Activated CD4-positive, alpha-beta T cell treated with anti-CD3 and anti-CD28 coated beads for 36 hours (primary cell): ENCODE measurements at regions of chr1 and their contacts with region 1.

Region 1: DNA sequence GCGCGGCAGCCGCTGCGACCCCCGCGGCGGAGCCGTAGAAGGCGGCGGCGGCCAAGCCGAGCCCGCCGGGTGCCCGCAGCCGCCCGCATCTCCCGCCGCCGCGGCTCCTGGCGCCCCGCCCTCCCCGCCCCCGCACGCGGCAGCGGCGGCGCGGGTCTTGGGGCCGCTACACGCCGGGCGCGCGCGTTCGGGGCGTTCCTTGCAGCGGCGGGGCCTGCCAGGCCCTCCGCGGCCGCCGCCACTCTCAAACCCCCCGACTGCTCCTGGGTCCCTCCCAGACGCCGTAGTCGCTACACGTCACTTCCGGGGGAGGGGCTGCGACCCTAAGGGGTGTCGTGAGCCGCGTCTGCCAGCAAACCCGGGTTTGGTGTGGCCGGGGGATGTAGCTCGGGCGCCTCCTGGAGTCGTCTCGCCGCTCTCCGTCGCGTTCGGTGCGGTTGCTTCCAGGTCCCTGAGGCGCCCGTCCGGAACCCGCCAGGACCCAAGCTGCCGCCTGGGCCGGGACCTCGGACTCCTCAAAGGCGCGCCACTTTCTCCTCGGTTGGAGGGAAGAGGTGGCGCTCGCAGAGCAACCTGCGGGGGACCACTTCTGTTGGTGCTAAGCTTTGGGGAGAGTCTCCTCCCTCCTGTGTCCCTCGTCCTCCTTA is at the start of gene ELK4:
- DNase-seq: peak; percentile 100
- ATAC-seq: peak; percentile 84
- H3K4me3 Mint-ChIP-seq: peak within 1 kb of the TSS; percentile 95
- H3K27ac Mint-ChIP-seq: peak within 1 kb of the TSS; percentile 99
- H3K4me1 Mint-ChIP-seq: peaks cover 32% of the 10 kb centered on the region
- H3K27me3 Mint-ChIP-seq: no peaks in the 10 kb centered on the region
- total RNA-seq, gene ELK4: 54.0 to 57.4 TPM

Region 2: GRCh38 chr1:204516180-204516879 is 1115.5 kb before region 1 on chr1 and contains the start of gene MDM4:
- CTCF ChIA-PET with region 1: no interaction called
- POLR2A ChIA-PET with region 1: no interaction called
- intact Hi-C with region 1: loop called in 1 of 2 experiments (anchors 2 kb)
- DNase-seq: peak; percentile 98
- ATAC-seq: peak; percentile 85
- H3K4me3 Mint-ChIP-seq: no peak within 1 kb of the TSS
- H3K27ac Mint-ChIP-seq: no peak within 1 kb of the TSS
- H3K4me1 Mint-ChIP-seq: peaks cover 62% of the 10 kb centered on the region
- H3K27me3 Mint-ChIP-seq: no peaks in the 10 kb centered on the region
- total RNA-seq, gene MDM4: 89.1 to 94.6 TPM

Region 3: DNA sequence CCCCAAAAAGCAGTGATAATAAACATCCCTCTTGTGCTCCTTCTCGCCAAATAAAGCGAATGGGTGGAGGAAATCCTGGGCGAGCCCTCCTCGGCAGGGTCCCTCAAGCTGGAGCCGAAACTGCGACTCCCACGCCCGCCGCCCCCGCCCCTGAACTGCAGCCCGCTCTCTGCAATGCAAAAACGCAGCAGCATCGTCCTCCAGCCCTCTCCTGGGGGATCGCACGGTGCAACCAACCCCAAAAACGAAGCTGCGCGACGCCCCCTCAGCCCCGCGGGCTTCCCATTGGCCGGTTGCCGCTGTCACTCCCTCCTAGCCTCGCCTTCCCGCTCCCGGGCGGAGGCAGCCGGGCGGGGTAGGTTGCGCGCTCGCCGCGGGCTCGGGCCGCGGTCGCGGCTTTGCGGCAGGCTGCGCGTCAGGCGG is 404.3 kb before region 1 on chr1 and contains the start of gene TMCC2:
- CTCF ChIA-PET with region 1: no interaction called
- POLR2A ChIA-PET with region 1: no interaction called
- intact Hi-C with region 1: loop called in 1 of 2 experiments (anchors 5 kb)
- DNase-seq: peak; percentile 92
- ATAC-seq: peak; percentile 81
- H3K4me3 Mint-ChIP-seq: peak within 1 kb of the TSS; percentile 89
- H3K27ac Mint-ChIP-seq: peak within 1 kb of the TSS; percentile 95
- H3K4me1 Mint-ChIP-seq: peaks cover 38% of the 10 kb centered on the region
- H3K27me3 Mint-ChIP-seq: peaks cover 14% of the 10 kb centered on the region
- total RNA-seq, gene TMCC2: 10.5 to 11.0 TPM

Region 4: GRCh38 chr1:205543411-205544301 is 88.2 kb before region 1 on chr1:
- CTCF ChIA-PET with region 1: no interaction called
- POLR2A ChIA-PET with region 1: no interaction called
- intact Hi-C with region 1: no loop called
- DNase-seq: peak; percentile 72
- ATAC-seq: peak; percentile 89
- H3K4me3 Mint-ChIP-seq: peak overlapping the region; percentile 22
- H3K27ac Mint-ChIP-seq: peak overlapping the region; percentile 17
- H3K4me1 Mint-ChIP-seq: peaks cover 5% of the 10 kb centered on the region
- H3K27me3 Mint-ChIP-seq: peaks cover 37% of the 10 kb centered on the region

Region 5: GRCh38 chr1:205591522-205592351 is 40.1 kb before region 1 on chr1:
- CTCF ChIA-PET with region 1: interaction called, 219 read pairs
- POLR2A ChIA-PET with region 1: interaction called, 47 read pairs
- intact Hi-C with region 1: loop called (anchors 1 kb)
- DNase-seq: peak; percentile 94
- ATAC-seq: peak; percentile 82
- H3K4me3 Mint-ChIP-seq: peak overlapping the region; percentile 78
- H3K27ac Mint-ChIP-seq: peak overlapping the region; percentile 78
- H3K4me1 Mint-ChIP-seq: peaks cover 35% of the 10 kb centered on the region
- H3K27me3 Mint-ChIP-seq: no peaks in the 10 kb centered on the region

Region 6: DNA sequence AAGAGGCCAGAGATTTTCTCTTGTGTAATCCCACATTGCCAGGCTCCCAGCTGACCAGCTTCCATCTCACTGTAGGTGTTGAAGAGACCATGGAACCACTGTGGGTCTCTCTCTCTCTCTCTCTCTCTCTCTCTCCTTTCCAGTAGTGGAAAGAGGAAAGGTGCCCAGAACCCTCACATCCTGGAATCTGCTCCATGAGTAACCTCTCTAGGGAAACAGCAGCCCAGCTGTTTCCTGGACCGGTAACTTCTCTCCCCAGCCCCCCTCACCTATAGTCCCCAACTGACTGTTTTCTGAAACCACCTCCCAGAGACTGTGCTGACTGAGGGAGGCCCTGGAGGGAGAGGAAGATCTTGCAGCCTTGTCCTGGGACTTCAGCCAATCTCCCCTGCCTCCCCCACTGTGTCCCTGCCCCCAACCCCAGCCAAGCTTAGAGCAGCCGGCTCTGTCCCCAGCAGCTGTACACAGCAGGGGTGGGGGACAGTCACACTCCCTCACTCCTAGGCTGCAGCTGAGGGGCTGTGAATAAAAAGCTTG is 69.1 kb after region 1 on chr1:
- CTCF ChIA-PET with region 1: no interaction called
- POLR2A ChIA-PET with region 1: interaction called, 17 read pairs
- intact Hi-C with region 1: no loop called
- DNase-seq: no peak
- ATAC-seq: no peak
- H3K4me3 Mint-ChIP-seq: no peak overlapping the region
- H3K27ac Mint-ChIP-seq: no peak overlapping the region
- H3K4me1 Mint-ChIP-seq: peaks cover 4% of the 10 kb centered on the region
- H3K27me3 Mint-ChIP-seq: peaks cover 6% of the 10 kb centered on the region

Region 7: DNA sequence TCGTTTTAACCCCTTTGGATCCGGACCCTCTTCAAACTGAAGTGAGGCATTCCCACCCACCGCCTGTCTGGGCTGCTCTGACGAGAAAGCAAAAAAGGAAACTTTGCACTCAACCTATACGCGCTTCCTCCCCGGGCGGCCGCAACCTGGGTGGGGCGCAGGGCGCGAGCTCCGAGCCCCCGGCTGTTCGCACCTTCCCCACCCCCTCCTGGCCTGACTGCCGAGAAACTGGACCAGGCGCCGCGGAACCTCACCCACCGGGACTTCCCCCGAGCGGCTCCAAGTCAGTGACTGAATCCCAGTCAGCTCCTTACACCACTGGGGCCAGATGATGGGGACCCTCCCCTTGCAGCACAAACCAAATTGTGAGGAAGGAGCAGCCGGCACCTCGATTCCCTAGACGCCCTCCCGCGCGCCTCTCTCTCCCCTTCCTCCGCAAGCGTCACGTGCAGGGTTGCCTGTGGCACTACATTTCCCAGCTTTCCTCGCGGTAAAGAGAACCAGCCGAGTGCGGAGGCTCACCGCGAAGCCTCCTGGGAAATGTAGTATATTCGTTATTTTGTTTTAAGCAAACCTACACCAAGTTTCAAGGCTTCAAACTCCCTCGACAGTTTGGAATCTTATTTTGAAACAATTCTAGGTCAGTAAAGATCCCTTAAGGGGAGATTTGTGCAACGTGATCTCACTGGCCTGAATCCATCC is 143.3 kb after region 1 on chr1 and contains the start of gene RAB29:
- CTCF ChIA-PET with region 1: interaction called, 3 read pairs
- POLR2A ChIA-PET with region 1: interaction called, 8 read pairs
- intact Hi-C with region 1: loop called (anchors 1 kb)
- DNase-seq: peak; percentile 93
- ATAC-seq: peak; percentile 80
- H3K4me3 Mint-ChIP-seq: peak within 1 kb of the TSS; percentile 89
- H3K27ac Mint-ChIP-seq: peak within 1 kb of the TSS; percentile 90
- H3K4me1 Mint-ChIP-seq: peaks cover 55% of the 10 kb centered on the region
- H3K27me3 Mint-ChIP-seq: no peaks in the 10 kb centered on the region
- total RNA-seq, gene RAB29: 29.3 to 29.4 TPM

Region 8: DNA sequence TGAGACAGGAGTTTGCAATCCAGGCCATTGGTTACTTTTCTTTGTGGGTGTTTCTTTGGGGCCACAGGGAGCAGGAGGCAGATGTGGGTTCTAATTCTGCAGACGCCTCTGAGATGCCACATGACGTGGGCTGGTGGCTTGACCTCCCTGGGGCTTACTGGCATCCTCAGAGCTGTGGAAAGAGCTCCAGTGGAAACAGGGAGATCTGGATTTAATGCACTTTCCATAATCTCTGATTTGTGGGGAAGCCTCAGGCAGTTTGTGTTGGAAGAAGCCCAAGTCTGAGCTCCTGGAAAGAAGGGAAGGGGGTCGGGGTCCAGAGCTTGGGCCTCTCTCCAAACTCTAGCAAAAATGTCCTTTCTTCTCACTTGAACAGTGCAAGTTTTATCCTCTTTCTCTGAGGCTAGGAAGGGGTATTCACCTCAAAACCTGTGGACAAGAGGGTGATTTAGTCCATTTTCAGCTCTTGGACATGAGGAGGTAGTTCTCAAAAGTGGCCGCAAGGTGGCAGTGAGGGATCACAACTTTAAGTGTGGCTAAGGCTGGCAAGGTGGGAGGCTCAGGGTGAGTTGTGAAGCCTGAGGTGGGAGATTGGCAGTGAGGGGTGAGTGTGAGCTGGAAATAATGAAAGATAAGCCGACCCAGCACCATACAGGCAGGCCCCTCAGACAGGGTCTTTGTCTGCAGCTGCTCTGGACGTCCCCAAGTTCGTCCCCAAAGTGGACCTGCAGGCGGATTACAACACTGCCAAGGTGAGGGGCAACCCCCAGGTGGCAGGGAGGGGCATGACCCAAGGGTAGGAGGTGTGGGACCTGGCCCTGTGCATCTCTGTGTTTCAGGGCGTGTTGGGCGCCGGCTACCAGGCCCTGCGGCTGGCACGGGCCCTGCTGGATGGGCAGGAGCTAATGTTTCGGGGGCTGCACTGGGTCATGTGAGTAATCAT is 847.6 kb after region 1 on chr1:
- CTCF ChIA-PET with region 1: no interaction called
- POLR2A ChIA-PET with region 1: no interaction called
- intact Hi-C with region 1: no loop called
- DNase-seq: peak; percentile 85
- ATAC-seq: peak; percentile 56
- H3K4me3 Mint-ChIP-seq: no peak overlapping the region
- H3K27ac Mint-ChIP-seq: peak overlapping the region; percentile 66
- H3K4me1 Mint-ChIP-seq: peaks cover 28% of the 10 kb centered on the region
- H3K27me3 Mint-ChIP-seq: no peaks in the 10 kb centered on the region